Dendritic cell treated with granulocyte-macrophage colony-stimulating factor and Interleukin-4, amounts not matched to agents 40 ng/mL and 50 ng/mL, for 4 days (primary cell): ENCODE measurements at regions of chr9 and their contacts with region 1.

Region 1: GRCh38 chr9:20941174-20941690 is 90.2 kb downstream of the HACD4 start:
- H3K4me3 Mint-ChIP-seq: no peak overlapping the region
- H3K27ac Mint-ChIP-seq: no peak overlapping the region
- H3K4me1 Mint-ChIP-seq: no peaks in the 10 kb centered on the region
- H3K27me3 Mint-ChIP-seq: no peaks in the 10 kb centered on the region

Region 2: GRCh38 chr9:19925817-19926503 is 1015.3 kb before region 1 on chr9:
- intact Hi-C with region 1: loop called (anchors 1 kb)
- H3K4me3 Mint-ChIP-seq: peak overlapping the region; percentile 55
- H3K27ac Mint-ChIP-seq: peak overlapping the region; percentile 50
- H3K4me1 Mint-ChIP-seq: peaks cover 22% of the 10 kb centered on the region
- H3K27me3 Mint-ChIP-seq: peaks cover 16% of the 10 kb centered on the region

Region 3: DNA sequence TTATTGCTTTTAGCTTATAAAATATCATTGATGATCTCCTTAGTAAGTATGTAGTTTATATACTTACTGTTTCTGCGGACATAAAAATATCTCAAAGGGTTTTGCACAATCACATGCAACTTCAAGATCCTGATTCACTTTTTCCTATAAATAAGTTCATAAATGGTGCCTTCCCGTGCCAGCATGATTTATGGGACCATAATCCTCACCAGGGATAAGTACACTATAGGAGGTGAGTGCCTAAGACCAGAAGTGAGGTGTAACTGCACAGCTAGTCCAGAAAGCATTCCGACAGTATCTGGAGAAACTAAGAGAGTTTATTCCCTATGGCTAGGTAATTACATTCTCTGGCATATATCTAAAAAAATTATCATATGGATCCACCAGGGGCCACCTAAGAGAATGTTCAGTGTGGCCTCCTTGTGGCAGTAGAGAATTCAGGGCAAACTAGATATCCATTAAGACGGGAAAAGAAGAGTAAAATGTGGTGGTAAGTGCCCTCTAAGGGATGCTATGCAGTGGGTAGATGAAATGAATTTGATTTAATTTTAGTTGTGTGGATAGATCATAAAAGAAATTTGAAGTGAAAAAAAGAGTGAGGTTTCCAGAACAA is 749.9 kb before region 1 on chr9:
- intact Hi-C with region 1: loop called (anchors 5 kb)
- H3K4me3 Mint-ChIP-seq: no peak overlapping the region
- H3K27ac Mint-ChIP-seq: no peak overlapping the region
- H3K4me1 Mint-ChIP-seq: no peaks in the 10 kb centered on the region
- H3K27me3 Mint-ChIP-seq: peaks cover 2% of the 10 kb centered on the region

Region 4: DNA sequence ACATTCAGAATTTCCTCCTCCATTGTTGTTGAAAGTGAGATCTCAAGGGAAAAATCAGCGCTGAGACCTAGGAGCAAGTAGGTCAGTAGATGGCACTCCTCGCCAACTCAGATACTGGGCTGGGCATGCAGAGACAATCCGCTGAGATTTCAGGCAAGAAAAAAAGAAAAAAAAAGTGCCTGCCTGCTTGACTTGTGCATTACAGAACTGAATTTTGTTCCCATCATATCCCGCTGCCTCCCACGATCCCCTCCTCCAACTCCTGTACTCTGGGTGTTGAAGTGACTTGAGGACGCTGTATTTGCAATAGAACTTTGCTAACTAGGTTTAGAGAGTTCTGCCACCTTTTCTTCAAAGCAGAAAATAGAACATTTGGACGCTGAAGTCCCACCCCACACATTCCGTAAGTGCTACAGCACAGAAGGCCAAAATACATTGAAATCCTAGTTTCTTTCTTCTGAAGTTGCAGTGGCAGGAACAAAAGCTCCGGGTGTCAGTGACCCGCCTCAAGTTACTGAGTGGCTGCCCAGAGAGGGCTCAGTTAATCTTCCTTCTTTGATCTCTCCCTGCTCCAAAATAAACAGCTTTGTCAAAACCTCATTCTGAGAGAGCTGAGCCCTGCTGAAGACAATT is 584.7 kb before region 1 on chr9:
- intact Hi-C with region 1: loop called (anchors 5 kb)
- H3K4me3 Mint-ChIP-seq: no peak overlapping the region
- H3K27ac Mint-ChIP-seq: no peak overlapping the region
- H3K4me1 Mint-ChIP-seq: peaks cover 4% of the 10 kb centered on the region
- H3K27me3 Mint-ChIP-seq: no peaks in the 10 kb centered on the region

Region 5: GRCh38 chr9:20622330-20623020 is 318.8 kb before region 1 on chr9 and contains the start of gene MLLT3:
- intact Hi-C with region 1: loop called (anchors 2 kb)
- H3K4me3 Mint-ChIP-seq: peak within 1 kb of the TSS; percentile 92
- H3K27ac Mint-ChIP-seq: peak within 1 kb of the TSS; percentile 80
- H3K4me1 Mint-ChIP-seq: peaks cover 47% of the 10 kb centered on the region
- H3K27me3 Mint-ChIP-seq: peaks cover 43% of the 10 kb centered on the region

Region 6: GRCh38 chr9:21110708-21111576 is 169.7 kb after region 1 on chr9:
- intact Hi-C with region 1: loop called (anchors 2 kb)
- H3K4me3 Mint-ChIP-seq: no peak overlapping the region
- H3K27ac Mint-ChIP-seq: no peak overlapping the region
- H3K4me1 Mint-ChIP-seq: no peaks in the 10 kb centered on the region
- H3K27me3 Mint-ChIP-seq: no peaks in the 10 kb centered on the region